ENCODE measurements at regions of chr20 and their contacts with region 1.

Region 1: GRCh38 chr20:50034567-50035208 is 51.9 kb downstream of the SNAI1 start:
- DNase-seq: peak; percentile 88
- H3K4me3 Mint-ChIP-seq: no peak overlapping the region
- H3K27ac Mint-ChIP-seq: peak overlapping the region; percentile 81
- H3K4me1 Mint-ChIP-seq: peaks cover 30% of the 10 kb centered on the region
- H3K27me3 Mint-ChIP-seq: no peaks in the 10 kb centered on the region
- CTCF ChIP-seq: no peak

Region 2: DNA sequence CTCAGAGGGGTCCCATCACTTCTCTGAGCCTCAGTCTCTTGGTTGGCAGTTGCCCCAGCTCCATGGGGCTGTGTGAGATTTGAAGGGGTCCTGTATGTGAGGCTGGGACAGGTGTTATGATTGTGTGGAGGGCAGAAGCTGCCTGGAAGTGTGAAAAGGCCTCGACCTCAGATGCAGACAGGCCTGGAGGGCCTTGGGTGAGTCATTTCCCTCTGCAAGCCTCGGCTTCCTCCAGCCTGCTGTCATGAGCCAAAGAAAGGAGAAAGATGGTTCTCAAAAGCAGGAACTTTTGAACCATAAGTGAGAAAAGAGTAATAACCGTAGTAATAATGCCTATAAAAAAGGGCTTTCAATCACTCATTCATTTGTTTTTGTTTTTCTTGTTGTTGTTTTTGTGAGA is 14.4 kb before region 1 on chr20:
- CTCF ChIA-PET with region 1: no interaction called
- POLR2A ChIA-PET with region 1: interaction called, 11 read pairs
- intact Hi-C with region 1: no loop called
- DNase-seq: peak; percentile 86
- H3K4me3 Mint-ChIP-seq: no peak overlapping the region
- H3K27ac Mint-ChIP-seq: peak overlapping the region; percentile 85
- H3K4me1 Mint-ChIP-seq: peaks cover 17% of the 10 kb centered on the region
- H3K27me3 Mint-ChIP-seq: no peaks in the 10 kb centered on the region
- CTCF ChIP-seq: no peak

Measured in MCF 10A (cell line).